Mammary epithelial cell (primary cell): ENCODE measurements at regions of chr15 and their contacts with region 1.

Region 1: GRCh38 chr15:83248151-83249029 is 36.1 kb downstream of the BNC1 start:
- DNase-seq: peak; percentile 62
- H3K4me3 ChIP-seq: no peak overlapping the region
- H3K27ac ChIP-seq: no peak overlapping the region
- H3K4me1 ChIP-seq: no peaks in the 10 kb centered on the region
- H3K27me3 ChIP-seq: no peaks in the 10 kb centered on the region
- CTCF ChIP-seq: peak; percentile 81 to 87

Region 2: GRCh38 chr15:83380682-83381081 is 132.3 kb after region 1 on chr15:
- CTCF ChIA-PET with region 1: interaction called, 13 read pairs
- dilution Hi-C with region 1: no loop called
- in situ Hi-C with region 1: no loop called
- intact Hi-C with region 1: loop called (anchors 1 kb)
- DNase-seq: peak; percentile 84
- H3K4me3 ChIP-seq: no peak overlapping the region
- H3K27ac ChIP-seq: peak overlapping the region; percentile 97
- H3K4me1 ChIP-seq: peaks cover 45% of the 10 kb centered on the region
- H3K27me3 ChIP-seq: no peaks in the 10 kb centered on the region
- CTCF ChIP-seq: peak; percentile 43 to 75

Region 3: GRCh38 chr15:83430441-83430840 is 182.1 kb after region 1 on chr15:
- CTCF ChIA-PET with region 1: no interaction called
- dilution Hi-C with region 1: no loop called
- in situ Hi-C with region 1: loop called (anchors 5 kb)
- intact Hi-C with region 1: no loop called
- DNase-seq: no peak
- H3K4me3 ChIP-seq: no peak overlapping the region
- H3K27ac ChIP-seq: no peak overlapping the region
- H3K4me1 ChIP-seq: no peaks in the 10 kb centered on the region
- H3K27me3 ChIP-seq: no peaks in the 10 kb centered on the region
- CTCF ChIP-seq: no peak

Region 4: GRCh38 chr15:83436458-83437158 is 188.2 kb after region 1 on chr15:
- CTCF ChIA-PET with region 1: interaction called, 19 read pairs
- dilution Hi-C with region 1: no loop called
- in situ Hi-C with region 1: loop called (anchors 5 kb)
- intact Hi-C with region 1: loop called (anchors 1 kb)
- DNase-seq: peak; percentile 61
- H3K4me3 ChIP-seq: no peak overlapping the region
- H3K27ac ChIP-seq: no peak overlapping the region
- H3K4me1 ChIP-seq: no peaks in the 10 kb centered on the region
- H3K27me3 ChIP-seq: no peaks in the 10 kb centered on the region
- CTCF ChIP-seq: peak; percentile 64 to 70

Region 5: DNA sequence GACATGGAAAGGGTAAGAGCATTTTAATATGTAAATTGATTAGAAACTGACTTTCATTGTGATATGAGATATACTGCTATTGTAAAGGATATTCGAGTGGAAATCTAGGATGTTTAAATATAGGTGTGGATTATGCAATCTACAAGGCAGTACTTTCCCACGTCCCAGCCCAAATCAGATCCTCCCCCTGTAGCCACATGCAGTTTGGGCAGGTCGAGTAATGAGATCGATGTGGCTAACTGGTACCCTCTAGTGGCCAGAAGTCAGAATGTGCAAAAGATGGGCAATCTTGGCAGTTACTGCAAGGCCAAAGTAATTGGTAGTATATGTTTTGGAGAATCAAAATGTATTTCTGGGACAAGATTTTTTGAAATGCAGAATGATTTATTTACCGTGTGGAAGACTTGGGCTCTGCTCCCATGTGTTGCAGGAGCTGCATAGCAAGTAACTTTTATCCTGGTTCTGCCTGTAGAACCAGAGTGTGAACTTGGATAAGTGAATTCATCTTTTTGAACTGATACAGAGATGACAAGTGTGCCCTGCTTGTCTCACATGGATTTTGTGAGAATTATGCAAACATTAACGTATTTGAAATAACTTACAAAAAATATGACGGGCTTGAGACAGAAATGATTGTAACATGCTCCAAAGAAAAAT is 311.0 kb after region 1 on chr15:
- CTCF ChIA-PET with region 1: interaction called, 7 read pairs
- dilution Hi-C with region 1: no loop called
- in situ Hi-C with region 1: loop called (anchors 5 kb)
- intact Hi-C with region 1: loop called (anchors 1 kb)
- DNase-seq: peak; percentile 71
- H3K4me3 ChIP-seq: no peak overlapping the region
- H3K27ac ChIP-seq: no peak overlapping the region
- H3K4me1 ChIP-seq: peaks cover 6% of the 10 kb centered on the region
- H3K27me3 ChIP-seq: no peaks in the 10 kb centered on the region
- CTCF ChIP-seq: peak; percentile 86 to 89

Region 6: GRCh38 chr15:84035399-84035766 is 787.0 kb after region 1 on chr15:
- CTCF ChIA-PET with region 1: no interaction called
- dilution Hi-C with region 1: no loop called
- in situ Hi-C with region 1: loop called in 1 of 2 experiments (anchors 25 kb)
- intact Hi-C with region 1: no loop called
- DNase-seq: peak; percentile 46
- H3K4me3 ChIP-seq: no peak overlapping the region
- H3K27ac ChIP-seq: no peak overlapping the region
- H3K4me1 ChIP-seq: no peaks in the 10 kb centered on the region
- H3K27me3 ChIP-seq: no peaks in the 10 kb centered on the region
- CTCF ChIP-seq: peak; percentile 74 to 75